Dorsolateral prefrontal cortex (tissue), 120 donors: ENCODE measurements at regions of chr2 and their contacts with region 1.

Region 1: GRCh38 chr2:10326707-10327594 is 24.2 kb downstream of the HPCAL1 start:
- DNase-seq: peak in 8 of 10 donors; percentile 40 to 90 (median 59)
- H3K4me3 ChIP-seq: peak overlapping the region in 2 of 59 donors; percentile 0 to 24
- H3K27ac ChIP-seq: peak overlapping the region in 1 of 59 donors; percentile 89
- H3K27me3 ChIP-seq: no peaks in the 10 kb centered on the region
- CTCF ChIP-seq: no peak

Region 2: DNA sequence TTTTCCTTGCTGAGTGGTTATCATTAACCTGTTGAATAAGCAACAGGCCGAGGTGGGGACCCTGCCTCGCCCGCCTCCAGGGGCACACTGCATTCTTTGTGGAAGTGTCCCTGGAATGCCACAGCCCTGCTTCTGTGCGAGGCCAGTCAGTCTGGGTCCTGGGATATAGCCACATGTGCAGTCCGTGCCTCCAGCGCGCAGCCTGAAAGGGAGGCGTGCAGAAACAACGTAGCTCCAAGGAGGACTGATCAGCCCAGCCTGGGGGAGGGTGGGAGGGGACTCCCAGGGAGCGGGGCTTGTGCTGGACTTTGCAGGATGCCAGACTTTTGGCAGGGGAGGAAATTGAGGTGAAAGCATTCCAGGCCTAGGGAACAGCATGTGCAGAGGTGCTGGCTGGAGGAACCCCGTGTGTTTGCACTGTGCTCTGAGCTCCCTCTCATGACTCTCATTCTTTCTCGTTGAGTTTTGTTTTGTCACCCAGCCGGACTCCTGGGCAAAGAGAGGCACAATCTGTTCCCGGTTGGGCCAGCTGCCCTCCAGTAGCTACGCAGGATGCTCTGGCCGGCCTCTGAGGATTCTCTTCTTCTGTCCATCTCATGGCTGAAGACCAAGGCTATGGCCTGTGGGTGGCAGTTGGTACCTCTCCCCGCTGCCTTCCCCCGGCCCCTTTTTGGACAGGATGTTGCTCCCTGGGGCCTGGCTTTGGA is 15.4 kb after region 1 on chr2:
- intact Hi-C with region 1: loop called in 1 of 2 experiments (anchors 1 kb)
- DNase-seq: peak in 1 of 10 donors; percentile 60
- H3K4me3 ChIP-seq: no peak overlapping the region
- H3K27ac ChIP-seq: peak overlapping the region in 1 of 59 donors; percentile 37
- H3K27me3 ChIP-seq: no peaks in the 10 kb centered on the region
- CTCF ChIP-seq: no peak